OCI-LY7 (cell line): ENCODE measurements at regions of chr4 and their contacts with region 1.

Region 1: GRCh38 chr4:83212041-83212851 is 72.4 kb downstream of the COQ2 start:
- DNase-seq: peak; percentile 99
- H3K4me3 ChIP-seq: peak overlapping the region; percentile 33
- H3K27ac ChIP-seq: peak overlapping the region; percentile 89
- H3K4me1 ChIP-seq: peaks cover 44% of the 10 kb centered on the region
- CTCF ChIP-seq: no peak

Region 2: DNA sequence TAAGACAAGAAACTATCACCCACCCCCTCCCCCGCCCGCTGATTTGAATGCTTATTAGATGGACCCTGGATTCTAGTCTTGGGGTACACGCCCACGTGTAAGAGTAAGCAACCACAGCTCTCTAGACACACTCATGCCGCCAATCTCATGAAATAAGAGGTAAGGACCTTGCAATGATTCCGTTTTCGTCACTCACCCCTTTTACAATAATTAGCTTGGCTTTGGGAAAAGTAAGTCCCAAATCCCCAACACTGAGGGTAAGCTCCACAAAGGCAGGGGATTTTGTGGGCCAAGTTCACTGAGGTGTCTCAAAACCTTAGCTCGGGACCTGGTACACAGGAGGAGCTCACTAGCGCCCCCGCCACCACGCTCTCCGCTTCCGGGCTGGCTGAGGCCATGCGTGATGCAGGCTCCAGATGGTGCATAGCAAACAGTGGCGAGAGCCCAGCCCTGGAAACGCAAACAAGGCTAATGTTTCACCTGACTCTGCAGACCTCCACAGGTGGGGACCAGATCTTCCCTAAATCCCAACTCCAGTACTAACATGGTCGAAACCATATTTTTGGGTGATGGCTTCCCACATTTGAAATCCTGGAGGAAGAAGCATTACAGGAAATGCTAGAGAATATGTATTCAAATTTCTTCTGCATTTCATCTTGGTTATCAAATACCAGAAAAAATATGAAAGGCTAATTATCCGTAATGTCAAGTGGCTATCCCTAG is 101.9 kb before region 1 on chr4:
- CTCF ChIA-PET with region 1: no interaction called
- POLR2A ChIA-PET with region 1: interaction called, 4 read pairs
- intact Hi-C with region 1: loop called (anchors 1 kb)
- DNase-seq: peak; percentile 93
- H3K4me3 ChIP-seq: peak overlapping the region; percentile 58
- H3K27ac ChIP-seq: peak overlapping the region; percentile 25
- H3K4me1 ChIP-seq: peaks cover 37% of the 10 kb centered on the region
- CTCF ChIP-seq: peak; percentile 91

Region 3: GRCh38 chr4:83180431-83180968 is 31.7 kb before region 1 on chr4:
- CTCF ChIA-PET with region 1: no interaction called
- POLR2A ChIA-PET with region 1: no interaction called
- intact Hi-C with region 1: no loop called
- DNase-seq: no peak
- H3K4me3 ChIP-seq: no peak overlapping the region
- H3K27ac ChIP-seq: no peak overlapping the region
- H3K4me1 ChIP-seq: peaks cover under 1% of the 10 kb centered on the region
- CTCF ChIP-seq: no peak